CD8-positive, alpha-beta T cell (primary cell): ENCODE measurements at regions of chr13 and their contacts with region 1.

Region 1: DNA sequence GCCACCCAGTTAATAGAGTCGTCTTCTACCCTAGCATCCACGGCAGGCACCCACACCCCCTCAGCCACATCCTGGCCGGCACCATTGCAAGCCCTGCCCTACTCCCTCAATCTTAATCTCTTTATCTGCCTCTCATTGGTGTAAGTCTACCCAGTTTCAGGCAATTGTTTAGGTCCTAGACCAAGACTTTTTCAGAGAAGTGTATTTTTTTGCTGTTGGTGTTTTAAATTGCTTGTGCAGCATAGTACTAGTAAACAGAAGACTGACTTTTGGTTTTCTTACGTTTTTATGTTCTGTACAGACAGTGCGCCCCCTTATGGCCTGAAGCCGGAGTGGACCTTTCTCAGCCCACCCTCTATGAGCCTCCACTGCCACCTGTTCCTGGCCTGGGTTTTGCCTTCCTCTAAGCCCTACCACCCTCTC is 2.3 kb upstream of the LCP1 start:
- DNase-seq: peak; percentile 57 to 89 (median 77)
- ATAC-seq: peak; percentile 57
- H3K4me3 ChIP-seq: peak overlapping the region; percentile 31 to 32
- H3K4me3 Mint-ChIP-seq: peak overlapping the region; percentile 96
- H3K27ac ChIP-seq: peak overlapping the region; percentile 23 to 94
- H3K27ac Mint-ChIP-seq: peak overlapping the region; percentile 95
- H3K4me1 ChIP-seq: peaks cover 30% of the 10 kb centered on the region
- H3K4me1 Mint-ChIP-seq: peaks cover 37% of the 10 kb centered on the region
- H3K27me3 ChIP-seq: no peaks in the 10 kb centered on the region
- H3K27me3 Mint-ChIP-seq: no peaks in the 10 kb centered on the region
- CTCF ChIP-seq: peak; percentile 74

Region 2: DNA sequence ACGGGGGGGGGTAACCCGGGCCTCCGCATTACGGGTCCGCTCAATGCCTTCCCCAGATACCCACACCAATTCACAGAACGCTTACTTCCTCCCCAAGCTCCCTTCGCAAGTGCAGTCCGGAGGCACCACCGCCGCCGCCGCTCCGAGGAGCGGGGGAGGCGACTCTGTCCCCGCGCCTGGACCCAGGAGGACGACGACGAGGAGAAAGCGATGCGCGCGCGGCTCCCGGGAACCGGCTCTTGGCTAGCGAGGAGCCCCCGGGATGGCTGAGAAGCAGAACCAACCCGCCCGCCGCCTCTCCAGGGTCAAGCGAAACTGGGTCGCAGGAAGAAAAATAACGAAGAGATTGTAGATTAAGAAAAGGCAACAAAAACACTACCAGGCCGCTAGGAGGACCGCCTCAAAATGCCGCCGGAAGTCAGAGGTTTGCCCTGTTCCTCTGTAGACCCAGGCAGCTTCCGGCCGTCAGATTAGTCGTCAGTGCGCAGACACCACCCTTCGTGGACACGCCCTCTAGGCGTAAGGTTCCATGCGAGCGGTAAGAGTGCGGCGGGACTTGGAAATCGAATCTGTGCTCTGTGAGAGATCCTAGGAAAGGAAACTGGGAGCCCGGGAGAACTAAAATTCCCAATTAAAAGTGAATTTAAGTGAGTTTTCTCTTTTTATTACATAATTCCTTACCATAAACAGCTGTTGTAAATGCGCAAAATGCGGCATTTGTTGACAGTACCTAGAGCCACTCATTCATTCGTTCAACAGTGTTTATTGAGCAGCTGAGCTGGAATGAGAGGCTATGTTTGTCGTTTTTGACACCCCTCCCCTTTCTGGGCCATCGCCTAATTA is 131.7 kb before region 1 on chr13 and contains the start of gene ZC3H13:
- CTCF ChIA-PET with region 1: no interaction called
- POLR2A ChIA-PET with region 1: no interaction called
- intact Hi-C with region 1: loop called (anchors 5 kb)
- DNase-seq: peak; percentile 84 to 97 (median 91)
- ATAC-seq: peak; percentile 97
- H3K4me3 ChIP-seq: peak within 1 kb of the TSS; percentile 77 to 89
- H3K4me3 Mint-ChIP-seq: peak within 1 kb of the TSS; percentile 88
- H3K27ac ChIP-seq: peak within 1 kb of the TSS; percentile 89 to 98
- H3K27ac Mint-ChIP-seq: peak within 1 kb of the TSS; percentile 94
- H3K4me1 ChIP-seq: peaks cover 23% of the 10 kb centered on the region
- H3K4me1 Mint-ChIP-seq: peaks cover 46% of the 10 kb centered on the region
- H3K27me3 ChIP-seq: no peaks in the 10 kb centered on the region
- H3K27me3 Mint-ChIP-seq: peaks cover 6% of the 10 kb centered on the region
- CTCF ChIP-seq: peak; percentile 37
- total RNA-seq, gene ZC3H13: 50.7 to 54.2 TPM

Region 3: GRCh38 chr13:46160471-46161066 is 23.7 kb before region 1 on chr13:
- CTCF ChIA-PET with region 1: interaction called, 44 read pairs
- POLR2A ChIA-PET with region 1: interaction called, 11 read pairs
- intact Hi-C with region 1: loop called (anchors 1 kb)
- DNase-seq: peak in 3 of 9 experiments; percentile 41 to 92 (median 85)
- ATAC-seq: peak; percentile 76
- H3K4me3 ChIP-seq: no peak overlapping the region
- H3K4me3 Mint-ChIP-seq: peak overlapping the region; percentile 73
- H3K27ac ChIP-seq: peak overlapping the region in 1 of 2 experiments; percentile 77
- H3K27ac Mint-ChIP-seq: peak overlapping the region; percentile 94
- H3K4me1 ChIP-seq: peaks cover 45% of the 10 kb centered on the region
- H3K4me1 Mint-ChIP-seq: peaks cover 55% of the 10 kb centered on the region
- H3K27me3 ChIP-seq: no peaks in the 10 kb centered on the region
- H3K27me3 Mint-ChIP-seq: no peaks in the 10 kb centered on the region
- CTCF ChIP-seq: peak; percentile 79

Region 4: GRCh38 chr13:46202188-46202795 is 18.0 kb after region 1 on chr13:
- CTCF ChIA-PET with region 1: interaction called, 11 read pairs
- POLR2A ChIA-PET with region 1: interaction called, 7 read pairs
- intact Hi-C with region 1: no loop called
- DNase-seq: peak in 1 of 9 experiments; percentile 61
- ATAC-seq: peak; percentile 73
- H3K4me3 ChIP-seq: no peak overlapping the region
- H3K4me3 Mint-ChIP-seq: peak overlapping the region; percentile 35
- H3K27ac ChIP-seq: peak overlapping the region in 1 of 2 experiments; percentile 49
- H3K27ac Mint-ChIP-seq: peak overlapping the region; percentile 83
- H3K4me1 ChIP-seq: peaks cover 36% of the 10 kb centered on the region
- H3K4me1 Mint-ChIP-seq: peaks cover 48% of the 10 kb centered on the region
- H3K27me3 ChIP-seq: no peaks in the 10 kb centered on the region
- H3K27me3 Mint-ChIP-seq: no peaks in the 10 kb centered on the region
- CTCF ChIP-seq: no peak

Region 5: GRCh38 chr13:46288570-46289259 is 104.4 kb after region 1 on chr13:
- CTCF ChIA-PET with region 1: interaction called, 16 read pairs
- POLR2A ChIA-PET with region 1: no interaction called
- intact Hi-C with region 1: no loop called
- DNase-seq: peak in 2 of 9 experiments; percentile 70 to 79
- ATAC-seq: peak; percentile 96
- H3K4me3 ChIP-seq: no peak overlapping the region
- H3K4me3 Mint-ChIP-seq: no peak overlapping the region
- H3K27ac ChIP-seq: no peak overlapping the region
- H3K27ac Mint-ChIP-seq: no peak overlapping the region
- H3K4me1 ChIP-seq: peaks cover 7% of the 10 kb centered on the region
- H3K4me1 Mint-ChIP-seq: peaks cover 19% of the 10 kb centered on the region
- H3K27me3 ChIP-seq: no peaks in the 10 kb centered on the region
- H3K27me3 Mint-ChIP-seq: no peaks in the 10 kb centered on the region
- CTCF ChIP-seq: peak; percentile 89